CD8-positive, alpha-beta T cell (primary cell): ENCODE measurements at regions of chr1 and their contacts with region 1.

Region 1: GRCh38 chr1:66282343-66282852 is 251.6 kb upstream of the SGIP1 start:
- DNase-seq: peak in 7 of 9 experiments; percentile 16 to 89 (median 54)
- ATAC-seq: peak; percentile 93
- H3K4me3 ChIP-seq: no peak overlapping the region
- H3K4me3 Mint-ChIP-seq: no peak overlapping the region
- H3K27ac ChIP-seq: peak overlapping the region in 1 of 2 experiments; percentile 13
- H3K27ac Mint-ChIP-seq: peak overlapping the region; percentile 84
- H3K4me1 ChIP-seq: peaks cover 55% of the 10 kb centered on the region
- H3K4me1 Mint-ChIP-seq: peaks cover 89% of the 10 kb centered on the region
- H3K27me3 ChIP-seq: no peaks in the 10 kb centered on the region
- H3K27me3 Mint-ChIP-seq: no peaks in the 10 kb centered on the region
- CTCF ChIP-seq: peak; percentile 35

Region 2: GRCh38 chr1:65866439-65866838 is 416.0 kb before region 1 on chr1:
- CTCF ChIA-PET with region 1: no interaction called
- POLR2A ChIA-PET with region 1: no interaction called
- intact Hi-C with region 1: no loop called
- DNase-seq: no peak
- ATAC-seq: no peak
- H3K4me3 ChIP-seq: no peak overlapping the region
- H3K4me3 Mint-ChIP-seq: no peak overlapping the region
- H3K27ac ChIP-seq: no peak overlapping the region
- H3K27ac Mint-ChIP-seq: no peak overlapping the region
- H3K4me1 ChIP-seq: no peaks in the 10 kb centered on the region
- H3K4me1 Mint-ChIP-seq: no peaks in the 10 kb centered on the region
- H3K27me3 ChIP-seq: no peaks in the 10 kb centered on the region
- H3K27me3 Mint-ChIP-seq: peaks cover 12% of the 10 kb centered on the region
- CTCF ChIP-seq: no peak

Region 3: DNA sequence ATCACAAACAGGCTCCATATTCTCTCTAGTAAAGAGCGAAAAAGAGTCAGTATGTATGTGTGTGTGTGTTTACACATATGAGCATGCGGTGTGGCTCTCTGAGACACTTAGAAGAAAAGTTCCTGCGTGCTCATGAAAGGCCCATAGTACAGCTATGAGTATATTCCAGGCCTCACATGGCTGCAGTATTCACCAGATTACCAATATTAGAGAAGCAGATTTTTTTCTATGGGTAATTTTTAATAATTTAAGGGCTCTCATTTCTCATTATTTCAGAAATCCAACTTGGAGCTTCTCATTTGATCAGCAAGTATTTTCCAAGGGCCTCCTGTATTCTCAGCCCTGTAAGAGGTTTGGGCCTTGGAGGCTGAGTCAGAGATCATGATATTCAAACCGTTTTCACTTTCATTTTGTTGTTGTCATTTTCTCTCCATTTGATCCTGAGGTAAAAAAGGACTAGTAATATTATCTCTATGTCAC is 18.6 kb after region 1 on chr1:
- CTCF ChIA-PET with region 1: interaction called, 12 read pairs
- POLR2A ChIA-PET with region 1: interaction called, 4 read pairs
- intact Hi-C with region 1: loop called (anchors 2 kb)
- DNase-seq: peak in 3 of 9 experiments; percentile 24 to 76 (median 60)
- ATAC-seq: peak; percentile 86
- H3K4me3 ChIP-seq: peak overlapping the region in 1 of 2 experiments; percentile 20
- H3K4me3 Mint-ChIP-seq: peak overlapping the region; percentile 79
- H3K27ac ChIP-seq: peak overlapping the region in 1 of 2 experiments; percentile 59
- H3K27ac Mint-ChIP-seq: peak overlapping the region; percentile 85
- H3K4me1 ChIP-seq: peaks cover 28% of the 10 kb centered on the region
- H3K4me1 Mint-ChIP-seq: peaks cover 31% of the 10 kb centered on the region
- H3K27me3 ChIP-seq: no peaks in the 10 kb centered on the region
- H3K27me3 Mint-ChIP-seq: no peaks in the 10 kb centered on the region
- CTCF ChIP-seq: no peak